CD4-positive, alpha-beta T cell (primary cell): ENCODE measurements at regions of chr19 and their contacts with region 1.

Region 1: DNA sequence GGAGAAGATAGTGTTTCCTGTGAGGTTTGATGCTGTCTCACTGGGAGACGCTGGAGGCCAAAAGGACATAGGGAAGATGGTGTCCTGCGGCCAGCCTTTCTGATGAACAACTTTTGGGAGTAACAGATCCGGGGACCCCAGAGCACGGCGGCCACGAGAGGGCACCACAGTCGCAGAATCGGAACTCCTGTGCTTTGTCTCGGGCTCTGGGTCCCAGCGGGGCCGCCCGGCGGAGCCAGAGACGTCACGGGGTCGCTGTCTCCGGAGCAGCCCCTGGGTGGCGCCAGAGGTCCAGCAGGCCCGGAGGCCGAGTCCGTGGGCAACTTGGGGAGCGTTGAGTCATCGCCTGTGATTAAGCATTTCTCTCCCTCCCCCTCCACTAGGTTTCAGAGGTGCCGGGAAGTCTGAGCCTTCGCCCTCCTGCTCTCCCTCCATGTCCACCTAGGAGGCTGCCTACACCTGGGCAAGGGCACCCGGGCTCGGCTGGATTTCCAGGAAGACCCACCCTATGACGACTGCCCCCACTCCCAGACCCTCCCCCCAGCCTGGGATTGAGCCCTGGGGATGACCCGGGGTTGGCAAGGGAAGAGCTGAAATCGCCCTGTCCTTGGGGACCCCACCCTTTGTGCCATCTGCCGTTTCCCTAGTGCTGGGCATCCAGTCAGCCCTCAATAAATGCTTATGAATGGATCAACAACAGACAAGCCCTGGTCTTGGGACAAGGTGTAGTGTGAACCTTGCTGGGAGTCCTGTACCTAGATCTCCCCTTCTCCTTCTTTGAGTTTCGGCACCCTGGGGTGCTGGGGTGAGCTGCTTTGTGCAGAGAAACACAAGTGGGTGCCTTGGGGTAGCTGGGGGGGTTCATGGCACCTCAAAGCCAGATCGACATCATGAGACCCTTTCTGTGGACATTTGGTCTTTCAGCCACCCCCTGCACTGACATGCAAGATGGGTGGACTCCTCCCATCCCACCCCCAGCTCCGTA is 3.4 kb downstream of the NANOS3 start:
- DNase-seq: peak; percentile 92 to 99 (median 98)
- ATAC-seq: peak; percentile 96
- H3K4me3 ChIP-seq: peak overlapping the region; percentile 27
- H3K4me3 Mint-ChIP-seq: peak overlapping the region; percentile 70
- H3K27ac ChIP-seq: peak overlapping the region; percentile 14 to 32
- H3K27ac Mint-ChIP-seq: peak overlapping the region; percentile 76
- H3K4me1 ChIP-seq: peaks cover 57% of the 10 kb centered on the region
- H3K4me1 Mint-ChIP-seq: peaks cover 41% of the 10 kb centered on the region
- H3K27me3 ChIP-seq: no peaks in the 10 kb centered on the region
- H3K27me3 Mint-ChIP-seq: no peaks in the 10 kb centered on the region
- CTCF ChIP-seq: peak; percentile 99

Region 2: GRCh38 chr19:13689085-13689484 is 191.3 kb before region 1 on chr19:
- CTCF ChIA-PET with region 1: no interaction called
- POLR2A ChIA-PET with region 1: no interaction called
- intact Hi-C with region 1: no loop called
- DNase-seq: peak in 3 of 14 experiments; percentile 20 to 39 (median 22)
- ATAC-seq: no peak
- H3K4me3 ChIP-seq: no peak overlapping the region
- H3K4me3 Mint-ChIP-seq: no peak overlapping the region
- H3K27ac ChIP-seq: no peak overlapping the region
- H3K27ac Mint-ChIP-seq: no peak overlapping the region
- H3K4me1 ChIP-seq: peaks cover 3% of the 10 kb centered on the region
- H3K4me1 Mint-ChIP-seq: no peaks in the 10 kb centered on the region
- H3K27me3 ChIP-seq: peaks cover 0 to 11% of the 10 kb centered on the region in 2 experiments
- H3K27me3 Mint-ChIP-seq: peaks cover 23% of the 10 kb centered on the region
- CTCF ChIP-seq: no peak

Region 3: GRCh38 chr19:13856497-13856896 is 23.9 kb before region 1 on chr19:
- CTCF ChIA-PET with region 1: no interaction called
- POLR2A ChIA-PET with region 1: no interaction called
- intact Hi-C with region 1: no loop called
- DNase-seq: no peak
- ATAC-seq: no peak
- H3K4me3 ChIP-seq: no peak overlapping the region
- H3K4me3 Mint-ChIP-seq: no peak overlapping the region
- H3K27ac ChIP-seq: no peak overlapping the region
- H3K27ac Mint-ChIP-seq: no peak overlapping the region
- H3K4me1 ChIP-seq: peaks cover 11% of the 10 kb centered on the region
- H3K4me1 Mint-ChIP-seq: peaks cover 13% of the 10 kb centered on the region
- H3K27me3 ChIP-seq: no peaks in the 10 kb centered on the region
- H3K27me3 Mint-ChIP-seq: no peaks in the 10 kb centered on the region
- CTCF ChIP-seq: no peak

Region 4: GRCh38 chr19:13952154-13953035 is 72.0 kb after region 1 on chr19 and contains the start of gene DCAF15:
- CTCF ChIA-PET with region 1: interaction called, 5 read pairs
- POLR2A ChIA-PET with region 1: no interaction called
- intact Hi-C with region 1: loop called (anchors 2 to 5 kb)
- DNase-seq: peak; percentile 96 to 100 (median 98)
- ATAC-seq: peak; percentile 97
- H3K4me3 ChIP-seq: peak within 1 kb of the TSS; percentile 82
- H3K4me3 Mint-ChIP-seq: peak within 1 kb of the TSS; percentile 100
- H3K27ac ChIP-seq: peak within 1 kb of the TSS; percentile 69 to 71
- H3K27ac Mint-ChIP-seq: peak within 1 kb of the TSS; percentile 97
- H3K4me1 ChIP-seq: peaks cover 30% of the 10 kb centered on the region
- H3K4me1 Mint-ChIP-seq: peaks cover 13% of the 10 kb centered on the region
- H3K27me3 ChIP-seq: no peaks in the 10 kb centered on the region
- H3K27me3 Mint-ChIP-seq: no peaks in the 10 kb centered on the region
- CTCF ChIP-seq: no peak
- total RNA-seq, gene DCAF15: 84.9 to 85.0 TPM

Region 5: GRCh38 chr19:14048443-14049153 is 168.2 kb after region 1 on chr19:
- CTCF ChIA-PET with region 1: interaction called, 15 read pairs
- POLR2A ChIA-PET with region 1: interaction called, 4 read pairs
- intact Hi-C with region 1: loop called (anchors 1 to 2 kb)
- DNase-seq: peak; percentile 53 to 84 (median 73)
- ATAC-seq: peak; percentile 94
- H3K4me3 ChIP-seq: no peak overlapping the region
- H3K4me3 Mint-ChIP-seq: no peak overlapping the region
- H3K27ac ChIP-seq: no peak overlapping the region
- H3K27ac Mint-ChIP-seq: peak overlapping the region; percentile 67
- H3K4me1 ChIP-seq: peaks cover 8% of the 10 kb centered on the region
- H3K4me1 Mint-ChIP-seq: peaks cover 10% of the 10 kb centered on the region
- H3K27me3 ChIP-seq: no peaks in the 10 kb centered on the region
- H3K27me3 Mint-ChIP-seq: no peaks in the 10 kb centered on the region
- CTCF ChIP-seq: peak; percentile 97

Region 6: GRCh38 chr19:14117668-14118164 is 237.4 kb after region 1 on chr19 and contains the start of gene PRKACA:
- CTCF ChIA-PET with region 1: no interaction called
- POLR2A ChIA-PET with region 1: no interaction called
- intact Hi-C with region 1: loop called in 1 of 2 experiments (anchors 1 kb)
- DNase-seq: peak; percentile 94 to 99 (median 97)
- ATAC-seq: peak; percentile 87
- H3K4me3 ChIP-seq: peak within 1 kb of the TSS; percentile 86
- H3K4me3 Mint-ChIP-seq: peak within 1 kb of the TSS; percentile 97
- H3K27ac ChIP-seq: peak within 1 kb of the TSS; percentile 65 to 83
- H3K27ac Mint-ChIP-seq: peak within 1 kb of the TSS; percentile 93
- H3K4me1 ChIP-seq: peaks cover 59% of the 10 kb centered on the region
- H3K4me1 Mint-ChIP-seq: peaks cover 55% of the 10 kb centered on the region
- H3K27me3 ChIP-seq: no peaks in the 10 kb centered on the region
- H3K27me3 Mint-ChIP-seq: no peaks in the 10 kb centered on the region
- CTCF ChIP-seq: no peak
- total RNA-seq, gene PRKACA: 27.4 to 29.8 TPM

Region 7: DNA sequence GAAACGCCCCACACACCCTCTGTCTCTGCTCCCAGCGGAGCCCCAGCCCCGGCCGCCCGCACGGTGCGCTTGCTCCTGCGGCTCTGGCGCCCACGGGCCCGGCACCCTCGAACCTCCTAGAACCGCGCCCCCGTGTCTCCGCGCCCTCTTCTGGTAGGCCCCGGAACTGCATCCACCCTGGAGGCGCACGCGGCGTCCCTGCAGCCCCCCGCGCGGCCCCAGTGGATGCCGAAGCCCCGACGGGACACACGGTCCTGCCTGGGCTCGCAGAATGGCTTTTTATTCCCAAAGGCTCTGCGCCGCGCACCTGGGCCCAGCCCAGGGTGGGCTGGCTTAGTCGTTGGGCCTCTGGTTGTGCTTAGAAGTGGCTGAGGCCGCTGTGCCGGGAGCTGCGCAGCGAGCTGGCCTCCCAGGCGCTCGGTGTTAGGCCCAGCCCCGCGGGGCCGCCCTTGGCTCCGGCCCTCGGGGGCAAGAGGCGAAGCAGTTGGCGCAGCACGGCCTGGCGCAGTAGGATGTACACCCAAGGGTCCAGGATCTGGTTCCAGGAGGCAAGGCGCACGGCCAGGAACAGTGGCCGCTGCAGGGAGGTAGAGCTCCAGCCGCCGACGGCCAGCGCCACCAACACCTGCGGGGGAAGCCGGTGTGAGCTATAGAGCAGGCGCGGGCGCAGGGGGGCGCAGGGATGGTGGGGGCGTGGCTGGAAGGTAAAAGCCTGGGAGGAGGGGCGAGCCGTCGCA is 592.0 kb after region 1 on chr19:
- CTCF ChIA-PET with region 1: no interaction called
- POLR2A ChIA-PET with region 1: no interaction called
- intact Hi-C with region 1: loop called in 1 of 2 experiments (anchors 10 kb)
- DNase-seq: peak; percentile 77 to 91 (median 86)
- ATAC-seq: peak; percentile 84
- H3K4me3 ChIP-seq: peak overlapping the region; percentile 34
- H3K4me3 Mint-ChIP-seq: peak overlapping the region; percentile 55
- H3K27ac ChIP-seq: no peak overlapping the region
- H3K27ac Mint-ChIP-seq: no peak overlapping the region
- H3K4me1 ChIP-seq: peaks cover 31% of the 10 kb centered on the region
- H3K4me1 Mint-ChIP-seq: peaks cover 36% of the 10 kb centered on the region
- H3K27me3 ChIP-seq: peaks cover 19 to 22% of the 10 kb centered on the region in 2 experiments
- H3K27me3 Mint-ChIP-seq: peaks cover 33% of the 10 kb centered on the region
- CTCF ChIP-seq: peak; percentile 98